Head of caudate nucleus (tissue), 42 donors: ENCODE measurements at regions of chr2 and their contacts with region 1.

Region 1: GRCh38 chr2:238060542-238061314 is at the start of gene SCLY:
- DNase-seq: peak; percentile 96 to 100 (median 99)

Region 2: DNA sequence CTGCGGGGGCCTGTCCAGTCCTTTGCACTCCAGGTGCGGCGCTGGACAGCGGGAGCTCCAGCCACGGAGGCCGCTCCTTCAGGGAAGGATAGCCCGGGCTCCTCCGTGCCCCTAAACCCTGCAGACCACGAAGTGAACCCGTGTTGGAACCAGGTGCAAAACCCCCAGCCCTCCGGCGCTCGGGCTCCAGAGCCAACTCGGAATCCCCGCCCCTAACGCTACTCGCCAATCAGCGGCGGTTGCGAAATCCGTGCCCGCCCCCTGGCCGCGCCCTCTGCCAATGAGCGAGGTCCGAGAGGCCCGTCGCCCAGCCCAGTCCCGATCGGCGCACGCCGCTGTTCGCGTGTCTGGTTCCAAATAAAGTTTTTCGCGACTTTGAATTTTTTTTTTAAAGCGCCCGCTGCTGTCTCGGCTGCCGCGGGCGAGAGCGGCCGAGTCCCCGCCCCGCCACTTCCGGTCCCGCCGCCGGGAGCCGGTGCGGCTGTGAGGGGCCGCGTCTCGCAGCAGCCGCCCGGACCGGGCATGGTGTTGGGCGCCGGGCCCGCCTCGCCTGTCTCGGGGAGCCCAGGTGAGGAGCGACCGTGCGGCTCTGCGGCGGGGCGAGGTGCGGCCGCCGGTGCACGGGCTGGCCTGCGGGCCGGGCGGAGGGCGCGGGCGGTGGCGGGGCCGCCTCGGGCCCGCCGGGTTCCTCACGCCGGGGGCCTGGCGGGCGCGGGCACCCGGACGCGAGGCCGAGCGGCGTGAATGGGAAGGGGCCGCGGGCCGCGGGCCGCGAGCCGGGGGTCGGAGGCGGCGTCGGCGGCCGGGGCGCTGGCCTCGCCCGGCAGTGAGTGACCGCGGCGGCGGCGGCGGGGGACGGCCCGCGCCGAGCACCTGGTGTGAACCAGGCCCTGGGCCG is 93.9 kb before region 1 on chr2 and contains the start of gene UBE2F:
- intact Hi-C with region 1: loop called (anchors 5 kb)
- DNase-seq: peak; percentile 94 to 99 (median 98)